ENCODE measurements at regions of chr5 and their contacts with region 1.

Region 1: GRCh38 chr5:172006321-172007174 is at the start of gene FBXW11:
- DNase-seq: peak; percentile 95 to 99 (median 98)

Region 2: DNA sequence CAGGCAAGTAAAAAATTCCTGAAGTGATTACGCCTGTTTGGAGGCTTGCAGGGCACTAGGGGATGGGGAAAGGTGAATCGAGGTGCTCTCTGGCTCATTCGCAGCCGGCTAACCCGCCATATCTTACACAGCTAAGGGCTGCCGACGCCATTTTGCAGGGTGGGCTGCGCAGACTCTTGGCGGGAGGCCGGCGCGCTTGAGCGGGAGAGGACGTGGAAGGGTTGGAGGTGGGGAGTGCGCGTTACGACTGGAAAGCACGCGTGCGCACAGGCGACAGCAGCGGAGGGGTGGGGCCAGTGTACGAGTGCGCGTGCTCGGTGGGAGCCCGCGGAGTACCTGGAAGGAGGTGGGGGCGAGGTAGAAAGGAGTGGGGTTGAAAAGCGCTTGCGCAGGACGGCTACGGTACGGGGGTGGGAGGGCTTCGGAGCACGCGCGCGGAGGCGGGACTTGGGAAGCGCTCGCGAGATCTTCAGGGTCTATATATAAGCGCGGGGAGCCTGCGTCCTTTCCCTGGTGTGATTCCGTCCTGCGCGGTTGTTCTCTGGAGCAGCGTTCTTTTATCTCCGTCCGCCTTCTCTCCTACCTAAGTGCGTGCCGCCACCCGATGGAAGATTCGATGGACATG is 619.1 kb before region 1 on chr5 and contains the start of gene NPM1:
- intact Hi-C with region 1: loop called (anchors 5 kb)
- DNase-seq: peak; percentile 87 to 98 (median 95)

Region 3: DNA sequence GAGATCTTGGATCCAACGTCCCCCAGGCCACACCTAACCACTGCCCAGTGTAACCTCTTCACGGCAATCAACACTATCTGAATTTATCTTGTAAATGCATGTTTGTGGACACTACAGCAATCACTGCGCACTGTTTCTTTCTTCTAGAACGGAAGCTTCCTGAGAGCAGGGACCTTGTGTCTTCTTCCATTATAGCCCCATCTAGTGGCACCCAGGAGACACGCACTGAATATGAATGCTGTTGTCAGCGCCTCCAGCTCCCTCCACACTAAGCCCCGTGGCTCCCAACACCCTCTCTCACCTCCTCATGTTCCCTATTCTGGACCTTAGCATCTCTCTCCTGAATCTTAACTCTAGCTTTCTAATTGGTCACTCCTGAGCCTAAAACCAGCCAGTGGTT is 148.2 kb before region 1 on chr5:
- intact Hi-C with region 1: no loop called
- DNase-seq: no peak

Region 4: DNA sequence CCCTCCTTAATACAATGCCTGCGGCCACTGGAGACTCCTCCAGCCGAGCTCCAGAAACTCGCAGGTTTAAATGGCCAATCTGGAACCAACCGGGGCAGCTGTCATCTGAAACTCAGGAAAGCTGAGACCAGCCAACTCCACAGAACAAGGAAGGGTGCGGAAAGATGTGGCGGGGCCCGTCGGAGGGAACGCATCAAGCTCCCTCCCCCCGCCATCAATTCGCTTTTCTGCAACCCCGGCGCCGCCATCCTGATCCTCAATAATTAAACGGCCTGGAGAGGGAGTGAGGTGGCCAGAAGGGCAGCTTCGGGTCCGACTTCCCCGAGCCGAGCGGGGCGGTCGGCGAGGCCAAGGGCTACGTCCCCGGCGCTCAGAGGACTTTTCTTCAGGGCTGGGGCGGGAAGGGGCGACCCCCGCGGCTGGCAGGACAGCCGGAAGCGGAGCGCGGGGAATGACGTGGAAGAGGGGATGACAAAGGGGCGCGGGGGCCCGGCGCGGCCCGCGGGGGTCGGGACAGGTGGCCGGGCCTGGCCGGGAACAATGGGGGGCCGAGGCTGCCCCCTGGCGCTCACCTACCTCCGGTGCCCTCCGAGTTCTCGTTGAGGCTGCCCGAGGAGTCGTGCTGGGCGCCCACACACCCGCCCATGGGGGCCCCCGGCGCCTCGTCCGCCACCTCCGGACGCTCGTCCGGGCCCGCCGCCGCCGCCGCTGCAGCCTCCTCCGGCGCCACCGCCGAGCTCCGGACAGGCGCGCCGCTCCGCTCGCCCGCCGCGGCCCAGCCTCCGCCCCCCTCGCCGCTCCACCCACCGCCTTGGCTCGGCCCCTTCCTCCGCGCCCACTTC is 276.7 kb after region 1 on chr5 and contains the start of gene UBTD2:
- intact Hi-C with region 1: loop called (anchors 5 kb)
- DNase-seq: peak; percentile 18 to 91 (median 78)